IMR-90 (cell line): ENCODE measurements at regions of chr4 and their contacts with region 1.

Region 1: GRCh38 chr4:158729716-158730559 is 6.7 kb upstream of the PPID start:
- DNase-seq: peak; percentile 75
- ATAC-seq: peak; percentile 100
- H3K4me3 ChIP-seq: no peak overlapping the region
- H3K27ac ChIP-seq: no peak overlapping the region
- H3K4me1 ChIP-seq: no peaks in the 10 kb centered on the region
- H3K27me3 ChIP-seq: peaks cover 8% of the 10 kb centered on the region
- CTCF ChIP-seq: peak; percentile 98
- POLR2A ChIP-seq: no peak
- RAD21 ChIP-seq: peak; percentile 97

Region 2: GRCh38 chr4:158768555-158769174 is 38.7 kb after region 1 on chr4 and contains the start of gene FNIP2:
- CTCF ChIA-PET with region 1: no interaction called
- POLR2A ChIA-PET with region 1: no interaction called
- dilution Hi-C with region 1: no loop called
- in situ Hi-C with region 1: no loop called
- intact Hi-C with region 1: loop called (anchors 2 kb)
- DNase-seq: peak; percentile 72
- ATAC-seq: peak; percentile 98
- H3K4me3 ChIP-seq: peak within 1 kb of the TSS; percentile 99
- H3K27ac ChIP-seq: peak within 1 kb of the TSS; percentile 87
- H3K4me1 ChIP-seq: peaks cover 1% of the 10 kb centered on the region; the same call in 1 of the 2 replicates
- H3K27me3 ChIP-seq: no peaks in the 10 kb centered on the region
- CTCF ChIP-seq: no peak
- POLR2A ChIP-seq: peak; percentile 80
- RAD21 ChIP-seq: no peak
- total RNA-seq, gene FNIP2: 22.2 and 24.6 TPM in 2 replicates

Region 3: GRCh38 chr4:158850800-158851644 is 121.1 kb after region 1 on chr4:
- CTCF ChIA-PET with region 1: interaction called, 10 read pairs
- POLR2A ChIA-PET with region 1: no interaction called
- dilution Hi-C with region 1: no loop called
- in situ Hi-C with region 1: loop called (anchors 5 kb)
- intact Hi-C with region 1: loop called (anchors 1 kb)
- DNase-seq: peak; percentile 44
- ATAC-seq: peak; percentile 48; the same call in 1 of the 2 replicates
- H3K4me3 ChIP-seq: no peak overlapping the region
- H3K27ac ChIP-seq: no peak overlapping the region
- H3K4me1 ChIP-seq: no peaks in the 10 kb centered on the region
- H3K27me3 ChIP-seq: no peaks in the 10 kb centered on the region
- CTCF ChIP-seq: peak; percentile 79
- POLR2A ChIP-seq: no peak
- RAD21 ChIP-seq: peak; percentile 68

Region 4: DNA sequence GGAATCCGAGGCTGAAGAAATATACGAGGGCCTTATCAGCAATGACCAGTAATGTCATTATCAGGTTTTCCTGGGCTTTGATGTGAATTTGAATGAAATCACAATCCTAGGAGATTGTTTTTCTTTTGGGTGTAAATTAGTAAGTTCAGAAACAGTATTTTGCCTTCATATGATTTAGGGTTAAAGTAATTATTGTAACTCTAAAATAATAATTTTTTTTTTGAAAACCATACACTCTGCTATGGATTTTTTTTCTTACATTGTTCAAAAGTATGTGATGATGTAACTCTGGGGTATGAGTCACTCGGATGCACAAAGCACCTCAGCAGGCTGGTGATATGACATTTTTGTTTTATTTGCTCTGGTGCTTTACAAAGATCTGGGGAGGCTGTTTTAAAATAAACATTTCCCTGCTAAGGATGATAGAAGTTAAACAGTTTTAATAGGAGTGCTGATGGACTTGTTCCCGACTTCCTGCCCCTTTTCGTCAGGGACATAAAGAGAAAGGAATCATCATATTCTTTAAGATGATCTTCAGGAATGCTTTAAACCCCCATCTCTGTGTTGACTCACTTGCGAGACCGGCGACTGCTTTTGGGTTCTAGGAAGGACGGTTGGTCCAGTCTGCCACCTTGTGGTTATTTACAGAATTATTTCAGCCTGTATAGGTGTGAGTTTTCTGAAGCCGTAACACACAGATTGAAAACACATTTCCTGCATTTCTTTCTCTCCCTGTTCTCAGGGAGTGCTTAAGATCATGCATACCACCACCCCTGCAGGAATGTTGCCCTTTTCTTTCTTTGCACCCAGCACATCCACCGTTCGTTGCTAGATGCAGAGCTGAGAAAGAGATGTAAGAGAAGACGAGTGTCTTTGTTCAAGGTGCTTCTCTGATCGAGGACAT is 445.4 kb after region 1 on chr4:
- CTCF ChIA-PET with region 1: no interaction called
- POLR2A ChIA-PET with region 1: no interaction called
- dilution Hi-C with region 1: no loop called
- in situ Hi-C with region 1: no loop called
- intact Hi-C with region 1: loop called (anchors 5 kb)
- DNase-seq: peak; percentile 94
- ATAC-seq: peak; percentile 88
- H3K4me3 ChIP-seq: peak overlapping the region; percentile 35; the same call in 1 of the 2 replicates
- H3K27ac ChIP-seq: peak overlapping the region; percentile 36; the same call in 1 of the 2 replicates
- H3K4me1 ChIP-seq: peaks cover 15% of the 10 kb centered on the region
- H3K27me3 ChIP-seq: no peaks in the 10 kb centered on the region
- CTCF ChIP-seq: peak; percentile 90
- POLR2A ChIP-seq: peak; percentile 43; the same call in 1 of the 2 replicates
- RAD21 ChIP-seq: peak; percentile 96

Region 5: GRCh38 chr4:159206427-159206871 is 476.5 kb after region 1 on chr4:
- CTCF ChIA-PET with region 1: no interaction called
- POLR2A ChIA-PET with region 1: no interaction called
- dilution Hi-C with region 1: no loop called
- in situ Hi-C with region 1: loop called (anchors 5 kb)
- intact Hi-C with region 1: loop called (anchors 1 kb)
- DNase-seq: peak; percentile 76
- ATAC-seq: peak; percentile 81
- H3K4me3 ChIP-seq: no peak overlapping the region
- H3K27ac ChIP-seq: no peak overlapping the region
- H3K4me1 ChIP-seq: peaks cover 3% of the 10 kb centered on the region
- H3K27me3 ChIP-seq: no peaks in the 10 kb centered on the region
- CTCF ChIP-seq: no peak
- POLR2A ChIP-seq: no peak
- RAD21 ChIP-seq: no peak